Heart left ventricle (tissue), 16 donors: ENCODE measurements at regions of chr22 and their contacts with region 1.

Region 1: DNA sequence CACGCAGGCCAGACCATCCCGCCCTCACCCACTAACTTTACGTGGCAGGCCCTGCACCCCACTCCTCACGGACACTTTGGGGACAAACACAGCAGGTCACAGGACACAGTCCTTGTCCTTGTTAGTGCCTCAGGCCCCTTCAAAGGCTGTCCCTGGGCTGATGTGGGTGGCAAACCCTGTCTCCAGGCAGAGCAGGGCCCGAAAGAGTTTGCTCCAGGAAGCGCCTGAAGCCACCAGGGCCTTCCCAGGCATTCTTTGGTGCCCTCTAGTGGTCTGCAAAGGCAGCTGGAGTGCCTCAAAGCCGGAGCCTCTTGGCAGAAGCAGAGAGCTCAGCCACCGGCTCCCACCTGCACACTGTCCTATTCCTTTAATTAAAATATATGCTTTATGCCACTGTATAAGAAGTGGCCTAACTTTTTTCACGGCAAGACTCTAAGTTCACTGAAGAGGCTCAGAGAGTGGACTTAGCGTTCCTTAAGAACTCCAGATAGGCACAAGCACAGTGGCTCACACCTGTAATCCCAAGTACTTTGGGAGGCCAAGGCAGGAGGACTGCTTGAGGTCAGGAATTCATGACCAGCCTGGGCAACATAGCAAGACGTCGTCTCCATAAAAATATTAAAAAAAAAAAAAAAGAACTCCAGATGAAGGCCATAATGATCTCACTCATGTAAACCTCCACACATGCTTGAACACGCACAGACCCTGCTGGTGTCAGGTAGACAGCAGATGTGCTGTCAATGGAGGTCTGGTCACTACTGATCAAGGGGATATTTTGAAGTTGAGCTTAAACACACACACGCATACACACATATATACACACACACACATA is 11.1 kb downstream of the TXN2 start:
- DNase-seq: peak; percentile 85 to 89 (median 87)
- ATAC-seq: peak; percentile 49 to 74 (median 69)
- H3K4me3 ChIP-seq: no peak overlapping the region
- H3K27ac ChIP-seq: peak overlapping the region in 11 of 12 donors; percentile 42 to 98 (median 94)
- H3K4me1 ChIP-seq: peaks cover 0 to 70% (median 60%) of the 10 kb centered on the region in 12 donors
- H3K27me3 ChIP-seq: no peaks in the 10 kb centered on the region
- CTCF ChIP-seq: peak; percentile 93 to 100 (median 97)
- POLR2A ChIP-seq: no peak

Region 2: GRCh38 chr22:36325154-36326031 is 145.0 kb before region 1 on chr22:
- intact Hi-C with region 1: loop called in 8 of 10 experiments (anchors 5 kb)
- DNase-seq: peak in 4 of 5 donors; percentile 60 to 74 (median 67)
- ATAC-seq: peak in 2 of 4 donors; percentile 4
- H3K4me3 ChIP-seq: no peak overlapping the region
- H3K27ac ChIP-seq: peak overlapping the region; percentile 89 to 100 (median 94)
- H3K4me1 ChIP-seq: peaks cover 41 to 100% (median 86%) of the 10 kb centered on the region in 12 donors
- H3K27me3 ChIP-seq: no peaks in the 10 kb centered on the region
- CTCF ChIP-seq: no peak
- POLR2A ChIP-seq: no peak

Region 3: GRCh38 chr22:36419177-36419911 is 51.0 kb before region 1 on chr22:
- intact Hi-C with region 1: no loop called
- DNase-seq: peak in 4 of 5 donors; percentile 54 to 69 (median 62)
- ATAC-seq: peak; percentile 49 to 82 (median 77)
- H3K4me3 ChIP-seq: peak overlapping the region in 9 of 12 donors; percentile 2 to 39 (median 26)
- H3K27ac ChIP-seq: peak overlapping the region; percentile 31 to 86 (median 81)
- H3K4me1 ChIP-seq: peaks cover 0 to 55% (median 18%) of the 10 kb centered on the region in 12 donors
- H3K27me3 ChIP-seq: no peaks in the 10 kb centered on the region
- CTCF ChIP-seq: no peak
- POLR2A ChIP-seq: no peak